Mammary epithelial cell (primary cell): ENCODE measurements at regions of chr17 and their contacts with region 1.

Region 1: DNA sequence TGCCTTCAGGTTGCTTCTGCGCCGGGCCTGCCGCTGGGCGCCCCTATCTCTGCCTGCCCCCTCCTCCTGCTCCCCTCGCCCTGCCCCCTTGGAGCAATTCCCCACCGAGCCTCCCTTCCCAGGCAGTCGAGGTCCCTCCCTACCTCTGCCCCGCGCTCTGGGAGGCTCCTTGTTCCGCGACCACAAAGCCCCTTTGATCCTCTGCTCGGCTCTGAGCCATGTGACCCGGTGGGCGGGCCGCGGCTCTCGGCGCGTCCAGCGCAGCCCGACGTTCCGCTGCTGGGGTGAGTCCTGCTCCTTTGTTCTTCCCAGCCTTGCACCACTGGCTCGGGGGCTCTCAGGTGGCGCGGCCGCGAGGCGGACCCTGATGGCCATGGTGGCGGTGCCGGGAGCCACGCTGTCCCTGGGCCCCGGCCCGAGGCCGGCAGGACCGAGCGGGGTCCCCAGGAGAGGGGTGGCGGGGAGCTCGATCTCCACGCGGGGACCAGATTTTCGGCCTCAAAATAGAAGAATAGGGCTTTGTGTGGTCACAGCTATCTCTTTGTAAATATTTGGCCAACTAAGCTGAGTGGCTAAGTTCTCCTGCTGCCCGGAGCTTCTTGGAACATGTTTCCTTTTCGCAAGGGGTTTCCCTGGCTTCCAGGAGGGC is 310.6 kb downstream of the SEC14L1 start:
- DNase-seq: peak; percentile 60
- H3K4me3 ChIP-seq: peak overlapping the region; percentile 18 to 51 (median 47)
- H3K27ac ChIP-seq: peak overlapping the region; percentile 73
- H3K4me1 ChIP-seq: peaks cover 74% of the 10 kb centered on the region
- H3K27me3 ChIP-seq: no peaks in the 10 kb centered on the region
- CTCF ChIP-seq: no peak

Region 2: GRCh38 chr17:77319211-77320043 is 131.9 kb before region 1 on chr17:
- CTCF ChIA-PET with region 1: no interaction called
- dilution Hi-C with region 1: loop called (anchors 10 kb)
- in situ Hi-C with region 1: no loop called
- intact Hi-C with region 1: no loop called
- DNase-seq: peak; percentile 86
- H3K4me3 ChIP-seq: peak overlapping the region; percentile 38 to 48 (median 41)
- H3K27ac ChIP-seq: peak overlapping the region; percentile 84
- H3K4me1 ChIP-seq: peaks cover 88% of the 10 kb centered on the region
- H3K27me3 ChIP-seq: no peaks in the 10 kb centered on the region
- CTCF ChIP-seq: no peak

Region 3: GRCh38 chr17:77331301-77331864 is 120.0 kb before region 1 on chr17:
- CTCF ChIA-PET with region 1: interaction called, 6 read pairs
- dilution Hi-C with region 1: loop called (anchors 10 kb)
- in situ Hi-C with region 1: no loop called
- intact Hi-C with region 1: loop called (anchors 1 kb)
- DNase-seq: peak; percentile 74
- H3K4me3 ChIP-seq: no peak overlapping the region
- H3K27ac ChIP-seq: peak overlapping the region; percentile 36
- H3K4me1 ChIP-seq: peaks cover 50% of the 10 kb centered on the region
- H3K27me3 ChIP-seq: no peaks in the 10 kb centered on the region
- CTCF ChIP-seq: peak; percentile 72 to 95

Region 4: GRCh38 chr17:77471984-77472461 is 20.7 kb after region 1 on chr17:
- CTCF ChIA-PET with region 1: no interaction called
- dilution Hi-C with region 1: no loop called
- in situ Hi-C with region 1: no loop called
- intact Hi-C with region 1: loop called (anchors 1 kb)
- DNase-seq: peak; percentile 76
- H3K4me3 ChIP-seq: no peak overlapping the region
- H3K27ac ChIP-seq: peak overlapping the region; percentile 82
- H3K4me1 ChIP-seq: peaks cover 72% of the 10 kb centered on the region
- H3K27me3 ChIP-seq: no peaks in the 10 kb centered on the region
- CTCF ChIP-seq: no peak

Region 5: DNA sequence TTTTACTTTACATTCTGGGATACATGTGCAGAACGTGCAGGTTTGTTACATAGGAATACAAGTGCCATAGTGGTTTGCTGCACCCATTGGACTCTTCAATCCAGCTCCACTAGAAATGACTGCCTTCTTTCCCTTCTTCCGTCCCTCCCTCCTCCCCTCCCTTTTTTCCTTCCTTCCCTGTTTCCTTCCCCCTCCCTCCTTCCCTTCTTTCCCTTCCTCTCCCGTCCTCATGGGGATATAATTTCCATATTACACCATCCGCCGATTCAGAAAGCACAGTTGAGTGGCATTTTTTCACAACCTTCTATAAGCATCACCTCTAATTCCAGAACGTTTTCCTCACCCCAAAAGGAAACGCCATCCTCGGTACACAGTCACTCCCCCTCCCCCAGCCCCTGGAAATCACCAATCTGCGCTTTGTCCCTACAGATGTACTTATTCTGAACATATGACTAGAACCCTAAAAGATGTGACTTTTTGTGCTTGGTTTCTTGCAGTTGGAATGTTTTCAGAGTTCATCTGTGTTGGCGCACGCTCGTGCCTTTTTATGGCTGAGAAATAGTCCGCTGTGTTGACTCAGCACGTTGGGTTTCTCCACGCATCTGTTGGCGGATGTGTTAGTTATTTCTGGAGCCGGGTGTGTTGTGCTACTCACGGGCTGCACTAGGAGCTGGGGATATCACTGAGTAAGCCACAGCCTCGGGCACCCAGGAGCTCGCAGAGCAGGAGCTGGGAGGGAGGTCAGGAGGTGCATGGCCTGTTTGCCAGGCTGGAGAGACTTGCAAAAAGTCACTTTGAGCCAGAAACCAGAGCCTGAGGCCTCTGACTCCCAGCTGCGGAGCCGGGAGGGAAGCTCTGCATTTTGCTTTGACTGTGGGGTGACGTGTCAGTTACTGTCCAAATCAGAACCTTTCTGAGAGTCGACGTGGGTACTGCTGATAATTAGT is 25.8 kb after region 1 on chr17:
- CTCF ChIA-PET with region 1: no interaction called
- dilution Hi-C with region 1: no loop called
- in situ Hi-C with region 1: no loop called
- intact Hi-C with region 1: loop called (anchors 1 kb)
- DNase-seq: peak; percentile 98
- H3K4me3 ChIP-seq: no peak overlapping the region
- H3K27ac ChIP-seq: peak overlapping the region; percentile 87
- H3K4me1 ChIP-seq: peaks cover 82% of the 10 kb centered on the region
- H3K27me3 ChIP-seq: no peaks in the 10 kb centered on the region
- CTCF ChIP-seq: no peak

Region 6: DNA sequence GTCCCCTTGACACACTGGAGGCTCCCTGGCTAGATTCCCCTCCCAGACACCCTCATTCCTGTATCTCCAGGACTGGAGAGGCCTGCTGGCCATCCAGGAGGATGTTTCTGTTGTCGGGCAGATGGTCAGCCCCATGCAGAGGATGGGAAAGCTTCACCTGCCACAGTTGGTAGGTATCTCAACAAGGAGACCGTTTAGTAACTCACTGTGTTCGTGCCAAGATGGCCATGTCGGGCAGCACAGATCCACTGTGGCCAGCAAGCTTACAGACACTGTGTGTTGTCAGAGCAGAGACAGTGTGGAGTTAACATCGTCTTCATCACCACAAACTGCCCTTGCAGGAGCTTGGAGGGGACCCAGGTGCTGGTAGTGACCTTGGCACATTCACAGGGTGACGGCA is 80.3 kb after region 1 on chr17:
- CTCF ChIA-PET with region 1: no interaction called
- dilution Hi-C with region 1: loop called (anchors 5 kb)
- in situ Hi-C with region 1: no loop called
- intact Hi-C with region 1: no loop called
- DNase-seq: no peak
- H3K4me3 ChIP-seq: no peak overlapping the region
- H3K27ac ChIP-seq: no peak overlapping the region
- H3K4me1 ChIP-seq: peaks cover 6% of the 10 kb centered on the region
- H3K27me3 ChIP-seq: peaks cover 8% of the 10 kb centered on the region
- CTCF ChIP-seq: no peak